ENCODE measurements at regions of chr1 and their contacts with region 1.

Region 1: DNA sequence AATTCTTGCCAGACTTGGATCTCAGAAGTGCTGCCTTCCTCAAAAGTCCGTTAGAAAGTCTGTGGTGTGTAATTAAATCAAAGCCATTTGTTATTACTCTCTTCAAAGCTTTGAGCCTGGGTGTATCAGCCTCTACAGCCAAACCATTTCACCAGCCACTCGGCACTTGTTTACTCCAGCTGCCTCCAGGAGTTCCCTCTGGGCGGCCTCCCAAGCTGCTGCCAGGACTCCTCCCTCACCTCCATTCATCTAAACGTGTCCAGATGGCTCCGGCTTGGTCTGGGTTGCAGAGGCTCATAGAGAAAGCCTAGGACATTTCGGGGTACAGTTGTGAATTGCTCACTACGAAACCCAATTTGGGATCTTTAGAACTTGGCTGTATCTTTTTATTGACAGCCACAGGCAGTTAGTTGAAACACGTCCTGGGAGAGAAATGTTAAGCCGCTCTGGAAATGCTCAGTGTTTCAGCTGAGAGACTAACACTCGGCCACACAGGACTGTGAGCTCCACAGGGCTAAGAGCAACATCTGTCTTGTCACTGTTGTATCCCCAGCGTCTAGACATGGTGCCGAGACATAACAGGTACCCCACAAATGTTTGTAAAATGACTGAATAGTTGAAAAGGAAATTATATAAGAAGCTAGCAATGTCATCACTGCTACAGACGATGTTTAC is 116.9 kb upstream of the NGF start:
- DNase-seq: no peak
- ATAC-seq: no peak
- H3K4me3 ChIP-seq: no peak overlapping the region
- H3K27ac ChIP-seq: no peak overlapping the region
- H3K4me1 ChIP-seq: peaks cover 46% of the 10 kb centered on the region
- H3K27me3 ChIP-seq: no peaks in the 10 kb centered on the region
- CTCF ChIP-seq: no peak

Region 2: GRCh38 chr1:115377411-115377810 is 77.6 kb before region 1 on chr1:
- CTCF ChIA-PET with region 1: interaction called, 3 read pairs
- POLR2A ChIA-PET with region 1: no interaction called
- intact Hi-C with region 1: loop called (anchors 2 kb)
- DNase-seq: peak; percentile 76
- ATAC-seq: peak; percentile 79
- H3K4me3 ChIP-seq: peak overlapping the region; percentile 7; the same call in 1 of the 2 replicates
- H3K27ac ChIP-seq: peak overlapping the region; percentile 62
- H3K4me1 ChIP-seq: peaks cover 26% of the 10 kb centered on the region
- H3K27me3 ChIP-seq: no peaks in the 10 kb centered on the region
- CTCF ChIP-seq: no peak

Region 3: DNA sequence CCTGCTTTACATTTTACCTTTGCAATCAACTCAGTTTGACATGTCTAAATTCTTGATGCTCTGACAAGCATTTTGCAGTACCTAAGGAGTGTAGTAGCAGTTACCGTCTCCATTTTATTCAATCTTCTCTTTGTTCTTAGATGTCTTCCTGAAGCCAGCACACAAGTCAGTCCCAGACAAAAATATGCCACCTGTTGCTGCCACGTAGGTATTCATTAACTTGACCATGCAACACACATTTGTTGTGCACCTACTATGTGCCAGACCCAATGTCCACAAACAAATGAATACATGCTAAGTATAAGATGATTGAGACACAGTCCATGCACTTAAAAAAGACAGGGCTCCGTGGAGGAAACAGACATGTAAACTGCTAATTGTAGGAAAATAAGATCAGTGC is 35.4 kb before region 1 on chr1:
- CTCF ChIA-PET with region 1: no interaction called
- POLR2A ChIA-PET with region 1: no interaction called
- intact Hi-C with region 1: loop called (anchors 5 kb)
- DNase-seq: no peak
- ATAC-seq: no peak
- H3K4me3 ChIP-seq: no peak overlapping the region
- H3K27ac ChIP-seq: no peak overlapping the region
- H3K4me1 ChIP-seq: peaks cover 19% of the 10 kb centered on the region
- H3K27me3 ChIP-seq: no peaks in the 10 kb centered on the region
- CTCF ChIP-seq: no peak

Region 4: GRCh38 chr1:115476616-115477015 is 21.6 kb after region 1 on chr1:
- CTCF ChIA-PET with region 1: no interaction called
- POLR2A ChIA-PET with region 1: no interaction called
- intact Hi-C with region 1: no loop called
- DNase-seq: no peak
- ATAC-seq: peak; percentile 30; the same call in 1 of the 2 replicates
- H3K4me3 ChIP-seq: no peak overlapping the region
- H3K27ac ChIP-seq: no peak overlapping the region
- H3K4me1 ChIP-seq: peaks cover 10% of the 10 kb centered on the region
- H3K27me3 ChIP-seq: no peaks in the 10 kb centered on the region
- CTCF ChIP-seq: 0 out of 2 replicates have a peak, but pooled peaks have one; percentile 20

Region 5: DNA sequence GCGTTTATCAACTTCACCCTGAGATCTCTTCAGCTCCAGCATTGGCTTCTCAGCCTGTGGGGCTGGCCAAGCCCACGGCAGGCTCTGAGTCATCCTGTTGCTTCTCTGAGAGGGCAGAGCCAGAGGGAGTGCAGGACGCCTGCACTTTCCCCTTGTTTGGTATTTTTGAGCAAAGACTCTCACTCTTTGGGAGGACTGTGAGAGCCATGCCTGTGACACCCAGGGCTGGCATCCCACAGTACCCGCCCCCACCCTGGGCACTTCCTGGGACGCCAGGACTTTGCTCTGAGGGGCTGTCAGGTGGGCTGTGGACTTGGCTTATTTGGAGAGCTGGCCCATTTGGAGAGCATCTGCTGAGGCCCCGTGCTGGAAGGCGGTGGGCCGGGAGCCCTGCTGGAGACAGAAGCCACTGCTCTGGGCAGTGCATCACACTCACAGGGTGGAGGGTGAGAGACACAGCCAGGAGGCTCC is 224.2 kb after region 1 on chr1:
- CTCF ChIA-PET with region 1: no interaction called
- POLR2A ChIA-PET with region 1: no interaction called
- intact Hi-C with region 1: no loop called
- DNase-seq: peak; percentile 85
- ATAC-seq: peak; percentile 97
- H3K4me3 ChIP-seq: no peak overlapping the region
- H3K27ac ChIP-seq: peak overlapping the region; percentile 7; the same call in 1 of the 2 replicates
- H3K4me1 ChIP-seq: peaks cover 47% of the 10 kb centered on the region
- H3K27me3 ChIP-seq: no peaks in the 10 kb centered on the region
- CTCF ChIP-seq: no peak